ENCODE measurements at regions of chr6 and their contacts with region 1.

Region 1: DNA sequence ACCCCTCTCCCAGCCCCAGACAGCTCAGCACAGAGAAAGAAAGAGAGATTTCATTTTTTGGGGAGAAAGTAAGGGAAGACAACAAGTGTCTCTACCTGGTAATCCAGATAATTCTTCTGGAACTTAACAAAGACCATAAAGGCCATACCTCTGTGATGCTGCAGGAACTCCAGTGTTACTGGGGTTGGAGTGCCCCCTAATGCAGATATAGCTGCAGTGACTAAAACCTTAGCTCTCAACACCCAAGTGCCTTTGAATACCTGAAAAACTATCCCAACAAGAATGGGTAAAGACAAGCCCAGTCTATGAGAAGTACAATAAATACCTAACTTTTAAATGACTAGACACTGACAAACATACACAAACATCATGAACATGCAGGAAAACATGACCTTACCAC is 365.3 kb upstream of the PTCHD4 start:
- DNase-seq: peak; percentile 31
- ATAC-seq: peak; percentile 93
- H3K4me3 Mint-ChIP-seq: no peak overlapping the region
- H3K27ac Mint-ChIP-seq: no peak overlapping the region
- H3K4me1 Mint-ChIP-seq: peaks cover 4% of the 10 kb centered on the region; the same call in 1 of the 2 replicates
- H3K27me3 Mint-ChIP-seq: no peaks in the 10 kb centered on the region
- CTCF ChIP-seq: no peak

Region 2: GRCh38 chr6:48401016-48401415 is 75.2 kb before region 1 on chr6:
- CTCF ChIA-PET with region 1: no interaction called
- POLR2A ChIA-PET with region 1: no interaction called
- DNase-seq: no peak
- ATAC-seq: no peak
- H3K4me3 Mint-ChIP-seq: no peak overlapping the region
- H3K27ac Mint-ChIP-seq: no peak overlapping the region
- H3K4me1 Mint-ChIP-seq: no peaks in the 10 kb centered on the region
- H3K27me3 Mint-ChIP-seq: no peaks in the 10 kb centered on the region
- CTCF ChIP-seq: no peak

Region 3: GRCh38 chr6:48765352-48765961 is 289.2 kb after region 1 on chr6:
- CTCF ChIA-PET with region 1: interaction called, 11 read pairs
- POLR2A ChIA-PET with region 1: no interaction called
- DNase-seq: peak; percentile 38
- ATAC-seq: peak; percentile 98
- H3K4me3 Mint-ChIP-seq: peak overlapping the region; percentile 37
- H3K27ac Mint-ChIP-seq: no peak overlapping the region
- H3K4me1 Mint-ChIP-seq: peaks cover 29% of the 10 kb centered on the region
- H3K27me3 Mint-ChIP-seq: no peaks in the 10 kb centered on the region
- CTCF ChIP-seq: peak; percentile 37; the same call in 1 of the 2 replicates

Measured in WTC11 (cell line).